GM23248 (cell line): ENCODE measurements at regions of chr3 and their contacts with region 1.

Region 1: GRCh38 chr3:113844622-113845222 is 6.1 kb downstream of the GRAMD1C start:
- DNase-seq: peak; percentile 65
- H3K4me3 ChIP-seq: no peak overlapping the region
- H3K27ac ChIP-seq: no peak overlapping the region
- H3K4me1 ChIP-seq: no peaks in the 10 kb centered on the region
- H3K27me3 ChIP-seq: no peaks in the 10 kb centered on the region

Region 2: DNA sequence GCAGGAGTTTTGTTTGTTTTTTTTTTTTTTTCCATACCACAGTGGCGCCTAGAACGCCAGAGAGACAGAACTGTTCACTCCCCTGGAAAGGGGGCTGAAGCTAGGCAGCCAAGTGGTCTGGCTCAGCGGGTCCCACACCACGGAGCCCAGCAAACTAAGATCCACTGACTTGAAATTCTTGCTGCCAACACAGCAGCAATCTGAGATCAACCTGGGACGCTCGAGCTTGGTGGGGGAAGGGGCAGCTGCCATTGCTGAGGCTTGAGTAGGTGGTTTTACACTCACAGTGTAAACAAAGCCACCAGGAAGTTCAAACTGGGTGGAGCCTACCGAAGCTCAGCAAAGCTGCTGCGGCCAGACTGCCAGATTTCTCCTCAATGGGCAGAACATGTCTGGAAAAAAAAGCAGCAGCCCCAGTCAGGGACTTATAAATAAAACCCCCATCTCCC is 359.5 kb before region 1 on chr3:
- in situ Hi-C with region 1: no loop called
- DNase-seq: no peak
- H3K4me3 ChIP-seq: no peak overlapping the region
- H3K27ac ChIP-seq: no peak overlapping the region
- H3K4me1 ChIP-seq: no peaks in the 10 kb centered on the region
- H3K27me3 ChIP-seq: no peaks in the 10 kb centered on the region

Region 3: GRCh38 chr3:113912552-113913236 is 68.0 kb after region 1 on chr3:
- in situ Hi-C with region 1: loop called (anchors 5 kb)
- DNase-seq: peak; percentile 75
- H3K4me3 ChIP-seq: no peak overlapping the region
- H3K27ac ChIP-seq: no peak overlapping the region
- H3K4me1 ChIP-seq: peaks cover 29% of the 10 kb centered on the region
- H3K27me3 ChIP-seq: no peaks in the 10 kb centered on the region

Region 4: GRCh38 chr3:114879059-114880031 is 1034.6 kb after region 1 on chr3:
- in situ Hi-C with region 1: no loop called
- DNase-seq: peak; percentile 82
- H3K4me3 ChIP-seq: peak overlapping the region; percentile 48
- H3K27ac ChIP-seq: peak overlapping the region; percentile 36
- H3K4me1 ChIP-seq: peaks cover 24% of the 10 kb centered on the region
- H3K27me3 ChIP-seq: no peaks in the 10 kb centered on the region